ENCODE measurements at regions of chrX and their contacts with region 1.

Region 1: DNA sequence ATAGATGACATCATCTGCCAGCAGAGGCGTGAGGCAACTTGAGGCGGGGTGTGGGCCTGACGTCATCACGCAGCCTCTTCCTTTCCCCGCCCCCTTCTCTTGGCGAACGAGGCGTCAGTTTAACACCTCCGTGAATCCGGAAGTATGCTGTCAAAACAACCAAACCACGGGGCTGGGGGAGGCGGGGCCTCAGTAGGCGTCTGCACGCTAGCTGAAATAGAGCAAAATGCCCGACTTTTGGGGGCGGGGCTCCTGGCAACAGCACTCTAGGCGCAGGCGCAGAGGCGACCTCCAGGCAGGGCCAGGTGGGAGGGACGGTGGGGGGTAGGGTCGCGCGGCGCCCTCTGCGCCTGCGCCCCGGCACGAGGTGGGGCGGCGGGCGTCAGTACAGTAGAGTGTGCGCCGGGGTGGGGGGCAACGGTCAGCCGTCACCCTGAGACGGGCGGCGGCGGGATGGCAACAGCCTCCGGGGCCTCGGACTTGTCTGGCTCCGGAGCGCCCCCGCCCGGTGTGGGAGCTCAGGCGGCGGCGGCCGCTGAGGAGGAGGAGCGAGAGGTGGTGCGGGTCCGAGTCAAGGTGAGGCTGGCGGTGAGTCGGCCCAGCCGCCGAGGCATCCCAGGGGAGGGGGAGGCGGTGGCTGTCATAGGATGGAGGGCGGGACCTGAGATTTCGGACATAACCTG is at the start of gene TBC1D25:
- DNase-seq: peak; percentile 90
- H3K4me3 ChIP-seq: peak within 1 kb of the TSS; percentile 77
- H3K27ac ChIP-seq: no peak within 1 kb of the TSS
- H3K27me3 ChIP-seq: no peaks in the 10 kb centered on the region
- CTCF ChIP-seq: peak; percentile 37
- polyA plus RNA-seq, gene TBC1D25: 7.9 and 9.3 TPM in 2 replicates

Region 2: GRCh38 chrX:48574270-48575266 is 35.1 kb after region 1 on chrX and contains the start of gene RBM3:
- CTCF ChIA-PET with region 1: no interaction called
- POLR2A ChIA-PET with region 1: interaction called, 15 read pairs
- DNase-seq: no peak
- H3K4me3 ChIP-seq: peak within 1 kb of the TSS; percentile 82
- H3K27ac ChIP-seq: peak within 1 kb of the TSS; percentile 98
- H3K27me3 ChIP-seq: no peaks in the 10 kb centered on the region
- CTCF ChIP-seq: peak; percentile 44
- polyA plus RNA-seq, gene RBM3: 294 and 317 TPM in 2 replicates

Region 3: GRCh38 chrX:48696301-48697181 is 157.1 kb after region 1 on chrX and contains the start of gene SUV39H1:
- CTCF ChIA-PET with region 1: no interaction called
- POLR2A ChIA-PET with region 1: no interaction called
- DNase-seq: peak; percentile 56
- H3K4me3 ChIP-seq: peak within 1 kb of the TSS; percentile 69
- H3K27ac ChIP-seq: peak within 1 kb of the TSS; percentile 31
- H3K27me3 ChIP-seq: no peaks in the 10 kb centered on the region
- CTCF ChIP-seq: no peak
- polyA plus RNA-seq, gene SUV39H1: 2.4 and 3.1 TPM in 2 replicates

Region 4: GRCh38 chrX:48897621-48898306 is 358.3 kb after region 1 on chrX and contains the starts of genes PQBP1 and TIMM17B:
- CTCF ChIA-PET with region 1: no interaction called
- POLR2A ChIA-PET with region 1: no interaction called
- DNase-seq: peak; percentile 88
- H3K4me3 ChIP-seq: peak within 1 kb of the TSS; percentile 80
- H3K27ac ChIP-seq: peak within 1 kb of the TSS; percentile 91
- H3K27me3 ChIP-seq: no peaks in the 10 kb centered on the region
- CTCF ChIP-seq: no peak
- polyA plus RNA-seq, gene PQBP1: 49.5 and 69.3 TPM in 2 replicates
- polyA plus RNA-seq, gene TIMM17B: 31.2 and 42.1 TPM in 2 replicates

Region 5: GRCh38 chrX:48972220-48973167 is 433.0 kb after region 1 on chrX:
- CTCF ChIA-PET with region 1: no interaction called
- POLR2A ChIA-PET with region 1: no interaction called
- DNase-seq: no peak
- H3K4me3 ChIP-seq: peak overlapping the region; percentile 53
- H3K27ac ChIP-seq: no peak overlapping the region
- H3K27me3 ChIP-seq: no peaks in the 10 kb centered on the region
- CTCF ChIP-seq: peak; percentile 59

Measured in AG04450 (cell line).